ENCODE measurements at regions of chr3 and their contacts with region 1.

Region 1: GRCh38 chr3:126389112-126389793 is 5.5 kb upstream of the CFAP100 start:
- DNase-seq: peak; percentile 19
- H3K4me3 ChIP-seq: peak overlapping the region; percentile 41
- H3K27me3 ChIP-seq: peaks cover 12% of the 10 kb centered on the region
- CTCF ChIP-seq: peak; percentile 76

Region 2: DNA sequence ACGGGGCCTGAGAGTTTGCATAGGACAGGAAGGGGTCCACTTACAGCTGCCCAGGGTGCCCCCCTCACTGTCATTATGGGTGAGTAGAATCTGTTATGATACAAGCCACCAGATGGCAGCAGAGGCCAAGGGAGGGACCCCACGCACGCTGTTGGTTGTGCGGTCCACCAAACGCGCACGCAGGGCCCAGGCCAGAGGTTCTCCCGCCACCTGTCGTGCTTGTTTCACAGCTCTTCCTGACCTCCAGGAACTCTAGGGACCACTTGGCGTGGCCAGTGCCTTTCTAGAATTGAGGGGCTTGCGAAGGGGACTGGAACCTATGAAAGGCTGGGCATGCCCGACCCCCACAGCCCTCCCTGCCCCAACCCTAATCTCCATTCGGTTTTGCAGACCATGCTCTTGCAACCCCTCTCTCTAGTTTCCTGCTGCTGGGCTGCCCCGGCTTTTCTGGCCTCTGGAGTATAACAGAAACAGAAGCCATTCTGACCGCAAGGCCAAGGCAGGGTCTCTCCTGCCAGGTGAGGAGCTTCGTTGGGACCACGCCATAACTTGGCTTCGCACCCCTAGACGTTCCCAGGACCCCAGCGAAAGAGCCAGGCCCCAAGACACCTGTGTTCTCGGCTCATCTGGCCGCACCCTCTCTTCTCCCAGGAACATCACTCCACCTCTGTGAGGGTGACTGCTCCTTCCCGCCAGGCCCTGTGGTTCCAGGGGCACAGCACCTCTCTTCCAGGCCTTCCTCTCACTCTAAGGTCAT is 254.9 kb before region 1 on chr3:
- CTCF ChIA-PET with region 1: interaction called, 53 read pairs
- POLR2A ChIA-PET with region 1: no interaction called
- DNase-seq: no peak
- H3K4me3 ChIP-seq: no peak overlapping the region
- H3K27me3 ChIP-seq: peaks cover 9% of the 10 kb centered on the region
- CTCF ChIP-seq: peak; percentile 80

Region 3: DNA sequence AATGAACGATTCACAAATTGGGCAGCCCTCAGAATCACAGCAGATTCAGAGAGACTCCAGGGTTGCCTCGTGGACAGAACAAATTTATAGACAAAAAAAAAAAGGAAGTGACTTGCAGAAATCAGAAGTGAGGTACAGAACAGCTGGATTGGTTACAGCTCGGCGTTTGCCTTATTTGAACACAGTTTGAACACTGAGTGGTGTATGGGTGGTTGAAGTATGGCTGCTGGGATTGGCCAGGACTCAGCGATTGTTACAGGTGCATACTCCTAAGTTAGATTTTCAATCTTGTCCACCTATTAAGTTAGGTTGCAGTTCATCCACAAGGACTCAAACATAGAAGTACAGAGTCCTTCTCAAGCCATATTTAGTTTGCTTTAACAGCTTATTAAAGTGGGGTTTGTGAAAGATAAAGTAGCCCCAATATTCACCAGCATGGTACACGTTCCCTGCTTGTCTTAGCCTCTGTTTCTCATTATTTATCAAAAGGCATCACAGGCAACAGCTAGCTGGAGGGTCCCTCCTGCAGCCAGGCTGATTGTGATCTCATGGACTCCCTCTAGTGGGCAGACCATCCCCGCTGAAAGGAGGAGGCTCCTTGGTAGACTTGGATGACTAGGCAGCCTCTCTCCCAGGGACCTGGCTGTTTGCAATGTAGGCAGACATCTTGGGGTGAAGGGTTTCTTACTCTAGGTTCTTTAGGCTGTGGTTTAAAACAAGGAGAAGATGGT is 191.2 kb before region 1 on chr3:
- CTCF ChIA-PET with region 1: interaction called, 10 read pairs
- POLR2A ChIA-PET with region 1: no interaction called
- DNase-seq: no peak
- H3K4me3 ChIP-seq: no peak overlapping the region
- H3K27me3 ChIP-seq: no peaks in the 10 kb centered on the region
- CTCF ChIP-seq: peak; percentile 91

Region 4: DNA sequence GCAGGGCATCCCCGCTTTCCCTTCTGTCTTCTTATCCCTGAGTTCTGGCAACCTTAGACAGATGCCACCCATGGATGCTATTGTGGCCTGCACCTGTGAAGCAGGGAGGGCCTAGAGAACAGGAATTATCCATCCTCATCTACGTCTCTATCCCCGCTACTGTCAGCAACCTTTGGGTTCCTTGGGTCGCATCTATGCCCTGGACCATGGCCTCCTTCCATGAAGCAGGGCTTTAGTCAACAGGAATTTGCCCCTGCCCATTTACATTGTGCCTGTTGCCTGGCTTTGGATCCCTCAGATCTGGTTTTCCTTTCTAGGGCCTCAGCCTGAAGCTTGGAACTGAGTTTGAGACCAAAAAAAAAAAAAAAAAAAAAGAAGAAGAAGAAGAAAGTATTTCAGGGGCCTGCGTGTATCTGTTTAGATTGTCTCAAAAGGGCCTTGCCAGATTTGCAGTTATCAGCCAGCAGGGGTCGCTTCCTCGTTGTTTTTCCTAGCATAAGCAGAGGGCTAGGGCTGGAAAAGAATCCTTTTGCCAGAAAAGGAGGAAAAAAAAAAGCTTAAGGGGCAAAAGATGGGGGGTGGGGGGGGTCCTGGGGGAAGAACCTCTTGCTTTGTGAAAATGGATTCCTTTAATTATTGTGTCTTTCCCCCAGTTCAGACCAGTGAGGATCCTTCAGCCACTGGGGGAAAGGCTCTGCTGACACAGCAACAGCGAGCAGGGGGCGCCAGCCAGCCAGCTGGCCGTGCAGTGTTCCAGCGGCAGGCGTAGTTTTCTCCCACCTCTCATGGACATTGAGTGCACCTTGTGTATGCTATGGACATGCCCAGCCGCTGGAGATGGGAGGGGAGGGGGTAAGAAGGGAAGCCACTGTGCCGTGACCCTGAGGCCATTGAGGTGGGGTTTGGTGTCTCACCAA is 143.2 kb before region 1 on chr3:
- CTCF ChIA-PET with region 1: interaction called, 47 read pairs
- POLR2A ChIA-PET with region 1: no interaction called
- DNase-seq: no peak
- H3K4me3 ChIP-seq: no peak overlapping the region
- H3K27me3 ChIP-seq: peaks cover 3% of the 10 kb centered on the region; the same call in 1 of the 2 replicates
- CTCF ChIP-seq: peak; percentile 69

Region 5: DNA sequence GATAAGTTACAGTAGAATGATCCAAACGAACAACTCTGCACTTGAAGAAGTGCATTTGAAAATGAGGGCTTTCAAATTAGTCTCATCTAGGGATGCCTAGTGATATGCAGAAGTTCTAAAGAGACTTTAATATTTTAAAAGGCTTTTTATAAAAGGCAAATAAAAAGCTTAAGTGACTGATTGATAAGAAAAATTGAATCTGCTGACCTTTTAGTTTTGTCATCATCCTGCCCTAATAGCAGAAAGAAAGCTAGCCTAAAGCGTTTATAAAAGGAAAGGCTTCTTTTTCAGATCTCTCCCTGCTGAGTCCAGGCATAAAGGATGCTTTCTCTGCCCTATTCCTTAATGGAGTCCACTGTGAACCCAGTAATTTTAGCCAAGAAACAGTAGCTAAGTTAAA is 136.2 kb before region 1 on chr3:
- CTCF ChIA-PET with region 1: interaction called, 10 read pairs
- POLR2A ChIA-PET with region 1: no interaction called
- DNase-seq: no peak
- H3K4me3 ChIP-seq: no peak overlapping the region
- H3K27me3 ChIP-seq: peaks cover 3% of the 10 kb centered on the region; the same call in 1 of the 2 replicates
- CTCF ChIP-seq: no peak

Region 6: GRCh38 chr3:126378341-126378751 is 10.9 kb before region 1 on chr3:
- CTCF ChIA-PET with region 1: interaction called, 10 read pairs
- POLR2A ChIA-PET with region 1: interaction called, 4 read pairs
- DNase-seq: no peak
- H3K4me3 ChIP-seq: no peak overlapping the region
- H3K27me3 ChIP-seq: peaks cover 6% of the 10 kb centered on the region
- CTCF ChIP-seq: no peak

Measured in BJ (cell line).